ENCODE measurements at regions of chr19 and their contacts with region 1.

Region 1: DNA sequence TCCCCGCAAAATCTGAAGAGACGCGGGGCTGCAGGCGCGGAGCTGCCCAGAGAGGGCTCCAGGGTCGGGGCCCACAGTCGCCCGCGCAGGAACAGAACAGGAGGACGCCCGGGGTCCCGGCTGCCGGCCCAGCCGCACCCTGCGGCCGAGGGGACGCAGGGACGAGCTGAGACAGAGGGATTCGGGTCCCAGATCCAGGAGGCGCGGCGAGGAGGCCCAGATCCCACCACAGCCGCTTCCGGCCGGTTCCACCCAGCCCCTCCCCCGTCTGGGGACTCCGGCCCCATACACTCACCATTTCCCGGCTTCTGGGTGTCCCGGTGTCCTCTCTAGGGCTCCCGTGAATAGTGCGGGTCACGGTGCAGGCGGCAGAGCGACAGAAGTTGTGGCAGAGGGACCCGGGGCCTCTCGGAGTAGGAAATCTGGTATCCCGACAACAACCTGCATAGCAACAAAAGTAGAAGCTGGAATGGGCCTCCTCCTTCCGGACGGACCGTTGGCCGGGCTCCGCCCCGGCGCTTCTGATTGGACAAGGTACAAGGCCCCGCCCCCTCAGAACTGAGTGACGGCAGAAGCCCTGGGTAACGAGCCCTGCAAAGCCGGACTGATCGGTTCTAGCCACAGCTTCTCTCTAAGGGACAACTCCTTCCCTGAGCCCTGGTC is at the start of gene ZNF20:
- DNase-seq: peak; percentile 95 to 97
- ATAC-seq: peak; percentile 98 to 100 (median 99)
- H3K4me3 ChIP-seq: peak within 1 kb of the TSS; percentile 57 to 97 (median 76)
- H3K27ac ChIP-seq: peak within 1 kb of the TSS; percentile 44 to 89 (median 78)
- H3K4me1 ChIP-seq: peaks cover 0 to 25% (median 20%) of the 10 kb centered on the region in 9 donors
- H3K27me3 ChIP-seq: no peaks in the 10 kb centered on the region
- CTCF ChIP-seq: peak in 1 of 9 donors; percentile 10
- total RNA-seq, gene ZNF20: 0.37 to 1.1 (median 0.95) TPM in 8 of 10 donors, not detected in the others

Region 2: DNA sequence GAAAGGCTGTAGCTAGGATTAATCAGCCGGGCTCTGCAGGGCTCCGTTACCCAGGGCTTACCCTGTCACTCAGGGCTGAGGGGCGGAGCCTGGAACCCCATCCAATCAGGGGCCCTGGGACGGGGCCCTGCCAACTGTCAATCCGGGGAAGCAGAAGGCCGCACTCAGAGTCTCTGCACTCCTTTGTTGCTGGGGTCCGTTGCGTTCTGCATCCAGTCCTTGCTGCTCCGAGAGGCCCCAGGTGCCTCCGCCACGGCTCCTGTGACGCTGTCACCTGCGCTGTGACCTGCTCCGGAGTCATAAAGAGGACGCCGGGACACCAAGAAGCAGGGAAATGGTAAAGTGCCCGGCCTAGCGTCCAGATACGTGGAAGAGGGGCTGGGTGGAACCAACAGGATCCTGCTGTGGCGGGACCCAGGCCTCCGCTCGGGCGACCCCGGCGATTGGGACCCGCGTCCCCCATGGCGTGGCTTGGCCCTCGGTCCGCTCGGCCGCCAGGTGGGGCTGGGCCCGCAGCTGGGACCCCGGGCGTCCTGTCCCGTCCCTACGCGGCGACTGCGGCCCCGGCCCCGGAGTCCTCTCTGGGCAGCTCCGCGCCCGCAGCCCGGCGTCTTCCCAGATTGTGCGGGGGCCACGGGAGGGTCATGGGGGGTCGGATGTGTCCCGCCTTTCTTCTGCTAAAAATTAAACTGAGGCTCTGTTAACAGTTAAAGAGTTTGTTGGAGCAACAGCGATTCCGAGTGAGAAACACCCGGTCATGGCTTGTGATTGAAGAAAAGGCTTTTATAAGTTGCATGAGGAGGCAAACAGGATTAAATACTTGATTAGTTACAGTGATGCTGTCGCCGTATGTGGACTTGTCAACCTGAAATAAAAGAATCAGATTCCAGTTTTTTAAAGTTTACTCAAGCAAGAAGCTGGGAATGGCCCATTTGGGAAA is 341.4 kb before region 1 on chr19 and contains the start of gene ZNF491:
- intact Hi-C with region 1: loop called in 5 of 10 experiments (anchors 2 to 5 kb)
- DNase-seq: peak; percentile 92 to 94
- ATAC-seq: peak; percentile 98 to 100 (median 99)
- H3K4me3 ChIP-seq: peak within 1 kb of the TSS; percentile 56 to 85 (median 78)
- H3K27ac ChIP-seq: peak within 1 kb of the TSS; percentile 48 to 90 (median 82)
- H3K4me1 ChIP-seq: peaks cover 5 to 24% (median 14%) of the 10 kb centered on the region in 9 donors
- H3K27me3 ChIP-seq: no peaks in the 10 kb centered on the region
- CTCF ChIP-seq: peak in 8 of 9 donors; percentile 17 to 59 (median 36)
- total RNA-seq, gene ZNF491: 1.4 to 5.1 (median 2.6) TPM

Region 3: DNA sequence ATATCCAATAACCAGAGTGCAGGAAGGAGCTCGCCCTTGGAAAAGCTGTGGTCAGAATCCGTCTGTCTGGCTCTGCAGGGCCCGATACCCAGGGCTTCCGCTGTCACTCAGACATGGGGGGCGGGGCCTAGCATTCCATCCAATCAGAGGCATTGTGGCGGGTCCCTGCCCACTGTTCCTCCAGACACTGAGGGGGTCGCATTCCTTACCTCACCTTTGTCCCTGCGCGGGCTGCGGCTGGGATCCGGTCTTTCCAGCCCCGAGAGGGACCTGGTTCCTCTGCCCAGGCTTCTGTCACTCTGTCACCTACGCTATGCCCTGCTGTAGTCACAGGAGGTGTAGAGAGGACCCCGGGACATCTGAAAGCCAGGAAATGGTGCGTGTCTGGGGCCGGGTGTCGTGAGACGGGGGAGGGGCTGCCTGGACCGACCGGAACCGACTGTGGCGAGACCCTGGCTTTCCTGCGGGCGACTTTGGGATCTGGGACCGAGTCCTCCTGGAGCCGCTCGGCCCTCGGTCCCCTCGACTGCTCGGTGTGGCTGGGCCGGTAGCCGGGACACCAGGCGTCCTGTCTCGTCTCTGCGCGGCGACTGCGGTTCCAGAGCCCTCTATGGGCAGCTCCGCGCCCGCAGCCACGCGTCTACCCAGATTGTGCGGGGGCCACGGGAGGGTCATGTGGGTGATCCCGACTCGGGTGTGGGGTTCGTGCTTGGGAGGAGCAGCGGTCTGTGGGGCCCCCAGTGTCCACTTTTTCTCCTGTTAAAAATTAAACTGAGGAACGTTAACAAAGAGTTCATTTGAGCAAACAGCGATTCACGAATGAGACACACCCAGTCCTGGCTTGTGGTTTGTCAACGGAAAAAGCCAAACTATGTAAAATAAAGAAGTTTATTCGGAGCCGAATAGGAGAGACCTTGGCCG is 252.1 kb before region 1 on chr19 and contains the start of gene ZNF69:
- intact Hi-C with region 1: loop called in 5 of 10 experiments (anchors 5 to 10 kb)
- DNase-seq: peak; percentile 90 to 91
- ATAC-seq: peak; percentile 95 to 100 (median 99)
- H3K4me3 ChIP-seq: peak within 1 kb of the TSS; percentile 56 to 83 (median 80)
- H3K27ac ChIP-seq: peak within 1 kb of the TSS in 9 of 10 donors; percentile 74 to 90 (median 83)
- H3K4me1 ChIP-seq: peaks cover 3 to 18% (median 12%) of the 10 kb centered on the region in 9 donors
- H3K27me3 ChIP-seq: no peaks in the 10 kb centered on the region
- CTCF ChIP-seq: peak in 4 of 9 donors; percentile 14 to 51 (median 40)
- total RNA-seq, gene ZNF69: 1.6 to 5.1 (median 4.3) TPM

Region 4: DNA sequence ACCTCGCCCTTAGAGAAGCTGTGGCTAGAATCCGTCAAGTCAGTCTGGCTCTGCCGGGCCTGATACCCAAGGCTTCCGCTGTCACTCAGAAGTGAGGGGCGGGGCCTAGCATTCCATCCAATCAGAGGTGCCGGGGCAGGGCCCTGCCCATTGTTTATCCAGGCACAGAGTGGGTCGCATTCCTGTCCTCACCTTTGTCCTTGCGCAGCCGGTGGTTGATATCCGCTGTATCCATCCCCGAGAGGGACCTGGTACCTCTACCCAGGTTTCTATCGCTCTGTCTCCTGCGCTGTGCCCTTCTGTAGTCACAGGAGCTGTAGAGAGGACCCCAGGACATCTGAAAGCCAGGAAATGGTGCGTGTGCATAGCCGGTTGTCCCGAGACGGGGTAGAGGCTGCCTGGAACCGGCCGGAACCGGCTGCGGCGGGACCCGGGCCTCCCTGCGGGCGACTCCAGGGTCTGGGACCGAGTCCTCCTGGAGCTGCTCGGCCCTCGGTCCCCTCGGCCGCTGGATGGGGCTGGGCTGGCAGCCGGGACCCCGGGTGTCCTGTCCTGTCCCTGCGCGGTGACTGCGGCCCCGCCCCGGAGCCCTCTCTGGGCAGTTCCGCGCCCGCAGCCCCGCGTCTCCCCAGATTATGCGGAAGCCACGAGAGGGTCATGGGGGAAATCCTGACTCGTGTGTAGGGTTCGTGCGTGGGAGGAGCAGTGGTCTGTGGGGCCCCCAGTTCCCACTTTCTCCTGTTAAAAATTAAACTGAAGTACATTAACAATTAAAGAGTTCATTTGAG is 175.0 kb before region 1 on chr19 and contains the start of gene ZNF763:
- intact Hi-C with region 1: loop called in 4 of 10 experiments (anchors 1 to 5 kb)
- DNase-seq: peak; percentile 92 to 95
- ATAC-seq: peak; percentile 96 to 99 (median 99)
- H3K4me3 ChIP-seq: peak within 1 kb of the TSS; percentile 55 to 94 (median 87)
- H3K27ac ChIP-seq: peak within 1 kb of the TSS; percentile 88 to 98 (median 95)
- H3K4me1 ChIP-seq: peaks cover 5 to 25% (median 17%) of the 10 kb centered on the region in 9 donors
- H3K27me3 ChIP-seq: no peaks in the 10 kb centered on the region
- CTCF ChIP-seq: no peak
- total RNA-seq, gene ZNF763: 1.7 to 7.1 (median 4.8) TPM

Region 5: GRCh38 chr19:11979527-11979926 is 160.5 kb before region 1 on chr19:
- intact Hi-C with region 1: no loop called
- DNase-seq: no peak
- ATAC-seq: no peak
- H3K4me3 ChIP-seq: no peak overlapping the region
- H3K27ac ChIP-seq: no peak overlapping the region
- H3K4me1 ChIP-seq: no peaks in the 10 kb centered on the region
- H3K27me3 ChIP-seq: no peaks in the 10 kb centered on the region
- CTCF ChIP-seq: no peak

Region 6: DNA sequence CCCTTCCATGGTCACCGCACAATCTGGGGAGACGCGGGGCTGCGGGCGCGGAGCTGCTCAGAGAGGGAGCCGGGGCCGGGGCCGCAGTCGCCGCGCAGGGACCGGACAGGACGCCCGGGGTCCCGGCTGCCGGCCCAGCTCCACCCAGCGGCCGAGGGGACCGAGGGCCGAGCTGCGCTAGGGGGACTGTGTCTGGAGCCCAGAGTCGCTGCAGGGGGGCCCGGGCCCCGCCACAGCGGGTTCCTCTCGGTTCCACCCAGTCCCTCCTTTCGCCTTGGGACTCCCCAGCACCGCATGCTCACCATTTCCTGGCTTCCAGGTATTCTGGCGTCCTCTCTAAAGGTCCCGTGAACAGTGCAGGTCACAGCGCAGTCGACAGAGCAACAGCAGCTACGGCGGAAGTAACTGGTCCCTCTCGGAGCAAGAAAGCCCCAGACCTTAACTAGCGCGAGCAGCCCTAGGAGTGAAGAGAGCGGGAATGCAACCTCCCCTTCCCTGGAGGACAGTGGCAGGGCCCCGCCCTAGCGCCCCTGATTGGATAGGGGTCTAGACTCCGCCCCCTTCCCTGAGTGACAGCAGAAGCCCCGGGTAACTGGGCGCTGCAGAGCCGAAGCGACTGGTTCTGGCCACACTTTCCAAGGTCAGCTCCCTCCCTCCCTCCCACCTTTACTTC is 87.4 kb before region 1 on chr19 and contains the start of gene ZNF878:
- intact Hi-C with region 1: loop called in 1 of 10 experiments (anchors 10 kb)
- DNase-seq: peak; percentile 89 to 91
- ATAC-seq: peak; percentile 99 to 100 (median 99)
- H3K4me3 ChIP-seq: peak within 1 kb of the TSS; percentile 44 to 85 (median 68)
- H3K27ac ChIP-seq: peak within 1 kb of the TSS in 9 of 10 donors; percentile 36 to 76 (median 72)
- H3K4me1 ChIP-seq: peaks cover 0 to 17% (median 11%) of the 10 kb centered on the region in 9 donors
- H3K27me3 ChIP-seq: peaks cover 0 to 4% (median 0%) of the 10 kb centered on the region in 7 donors
- CTCF ChIP-seq: peak in 4 of 9 donors; percentile 20 to 43 (median 41)
- total RNA-seq, gene ZNF878: 0.21 to 0.48 (median 0.34) TPM in 6 of 10 donors, not detected in the others

Region 7: GRCh38 chr19:12092065-12092867 is 47.8 kb before region 1 on chr19:
- intact Hi-C with region 1: loop called in 8 of 10 experiments (anchors 1 to 5 kb)
- DNase-seq: peak; percentile 90
- ATAC-seq: peak; percentile 97 to 100 (median 99)
- H3K4me3 ChIP-seq: peak overlapping the region; percentile 54 to 85 (median 70)
- H3K27ac ChIP-seq: peak overlapping the region; percentile 44 to 89 (median 74)
- H3K4me1 ChIP-seq: peaks cover 0 to 23% (median 9%) of the 10 kb centered on the region in 9 donors
- H3K27me3 ChIP-seq: no peaks in the 10 kb centered on the region
- CTCF ChIP-seq: no peak

Region 8: GRCh38 chr19:12187625-12188024 is 47.6 kb after region 1 on chr19:
- intact Hi-C with region 1: no loop called
- DNase-seq: no peak
- ATAC-seq: no peak
- H3K4me3 ChIP-seq: no peak overlapping the region
- H3K27ac ChIP-seq: no peak overlapping the region
- H3K4me1 ChIP-seq: no peaks in the 10 kb centered on the region
- H3K27me3 ChIP-seq: no peaks in the 10 kb centered on the region
- CTCF ChIP-seq: no peak